Breast epithelium (tissue), 4 donors: ENCODE measurements at regions of chrX and their contacts with region 1.

Region 1: GRCh38 chrX:85274333-85274732 is 30.5 kb downstream of the ZNF711 start:
- DNase-seq: no peak
- H3K4me3 ChIP-seq: no peak overlapping the region
- H3K27ac ChIP-seq: no peak overlapping the region
- H3K4me1 ChIP-seq: no peaks in the 10 kb centered on the region
- H3K27me3 ChIP-seq: no peaks in the 10 kb centered on the region
- CTCF ChIP-seq: no peak
- POLR2A ChIP-seq: no peak

Region 2: GRCh38 chrX:84876876-84877275 is 397.5 kb before region 1 on chrX:
- intact Hi-C with region 1: no loop called
- DNase-seq: no peak
- H3K4me3 ChIP-seq: no peak overlapping the region
- H3K27ac ChIP-seq: no peak overlapping the region
- H3K4me1 ChIP-seq: no peaks in the 10 kb centered on the region
- H3K27me3 ChIP-seq: no peaks in the 10 kb centered on the region
- CTCF ChIP-seq: no peak
- POLR2A ChIP-seq: no peak

Region 3: GRCh38 chrX:85024044-85024443 is 250.3 kb before region 1 on chrX:
- intact Hi-C with region 1: loop called (anchors 5 kb)
- DNase-seq: no peak
- H3K4me3 ChIP-seq: no peak overlapping the region
- H3K27ac ChIP-seq: no peak overlapping the region
- H3K4me1 ChIP-seq: no peaks in the 10 kb centered on the region
- H3K27me3 ChIP-seq: peaks cover 0 to 7% of the 10 kb centered on the region in 2 donors
- CTCF ChIP-seq: no peak
- POLR2A ChIP-seq: no peak

Region 4: DNA sequence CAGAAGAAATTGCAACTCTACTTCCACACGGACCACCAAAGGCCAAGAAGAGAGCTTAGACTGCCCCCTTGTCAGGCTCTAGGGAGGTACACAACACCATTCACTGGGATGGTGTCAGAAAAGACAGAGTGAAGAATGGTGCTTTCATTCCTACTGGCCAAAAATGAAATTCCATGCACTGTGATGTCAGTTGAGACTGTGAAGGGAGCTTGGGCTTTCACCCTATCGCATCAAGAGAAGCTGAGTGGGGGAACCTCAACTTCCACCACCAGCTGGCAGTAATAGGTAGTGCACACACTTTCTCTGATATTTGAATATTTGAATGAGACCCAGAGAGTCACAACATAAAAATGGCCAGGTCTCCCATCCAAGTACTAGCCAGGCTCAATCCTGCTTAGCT is 35.4 kb after region 1 on chrX:
- intact Hi-C with region 1: loop called (anchors 2 kb)
- DNase-seq: no peak
- H3K4me3 ChIP-seq: no peak overlapping the region
- H3K27ac ChIP-seq: no peak overlapping the region
- H3K4me1 ChIP-seq: no peaks in the 10 kb centered on the region
- H3K27me3 ChIP-seq: peaks cover 0 to 7% of the 10 kb centered on the region in 2 donors
- CTCF ChIP-seq: no peak
- POLR2A ChIP-seq: no peak